ENCODE measurements at regions of chr15 and their contacts with region 1.

Region 1: GRCh38 chr15:68277603-68278344 is at the start of gene FEM1B:
- DNase-seq: peak; percentile 73 to 96 (median 86)
- ATAC-seq: peak; percentile 76
- H3K4me3 ChIP-seq: peak within 1 kb of the TSS; percentile 90 to 93
- H3K4me3 Mint-ChIP-seq: peak within 1 kb of the TSS; percentile 98
- H3K27ac ChIP-seq: peak within 1 kb of the TSS; percentile 92 to 98
- H3K27ac Mint-ChIP-seq: peak within 1 kb of the TSS; percentile 98
- H3K4me1 ChIP-seq: peaks cover 47% of the 10 kb centered on the region
- H3K4me1 Mint-ChIP-seq: peaks cover 60% of the 10 kb centered on the region
- H3K27me3 ChIP-seq: no peaks in the 10 kb centered on the region
- H3K27me3 Mint-ChIP-seq: no peaks in the 10 kb centered on the region
- CTCF ChIP-seq: no peak
- total RNA-seq, gene FEM1B: 89.7 to 90.6 TPM

Region 2: GRCh38 chr15:66504563-66505429 is 1773.0 kb before region 1 on chr15 and contains the starts of genes RPL4 and ZWILCH:
- CTCF ChIA-PET with region 1: no interaction called
- POLR2A ChIA-PET with region 1: no interaction called
- intact Hi-C with region 1: loop called in 1 of 2 experiments (anchors 5 kb)
- DNase-seq: peak; percentile 67 to 92 (median 80)
- ATAC-seq: peak; percentile 86
- H3K4me3 ChIP-seq: peak within 1 kb of the TSS; percentile 88 to 95
- H3K4me3 Mint-ChIP-seq: peak within 1 kb of the TSS; percentile 100
- H3K27ac ChIP-seq: peak within 1 kb of the TSS; percentile 90 to 97
- H3K27ac Mint-ChIP-seq: peak within 1 kb of the TSS; percentile 99
- H3K4me1 ChIP-seq: peaks cover 32% of the 10 kb centered on the region
- H3K4me1 Mint-ChIP-seq: peaks cover 44% of the 10 kb centered on the region
- H3K27me3 ChIP-seq: no peaks in the 10 kb centered on the region
- H3K27me3 Mint-ChIP-seq: no peaks in the 10 kb centered on the region
- CTCF ChIP-seq: no peak
- total RNA-seq, gene RPL4: 4,516 to 4,651 TPM
- total RNA-seq, gene ZWILCH: 7.9 to 8.5 TPM

Region 3: DNA sequence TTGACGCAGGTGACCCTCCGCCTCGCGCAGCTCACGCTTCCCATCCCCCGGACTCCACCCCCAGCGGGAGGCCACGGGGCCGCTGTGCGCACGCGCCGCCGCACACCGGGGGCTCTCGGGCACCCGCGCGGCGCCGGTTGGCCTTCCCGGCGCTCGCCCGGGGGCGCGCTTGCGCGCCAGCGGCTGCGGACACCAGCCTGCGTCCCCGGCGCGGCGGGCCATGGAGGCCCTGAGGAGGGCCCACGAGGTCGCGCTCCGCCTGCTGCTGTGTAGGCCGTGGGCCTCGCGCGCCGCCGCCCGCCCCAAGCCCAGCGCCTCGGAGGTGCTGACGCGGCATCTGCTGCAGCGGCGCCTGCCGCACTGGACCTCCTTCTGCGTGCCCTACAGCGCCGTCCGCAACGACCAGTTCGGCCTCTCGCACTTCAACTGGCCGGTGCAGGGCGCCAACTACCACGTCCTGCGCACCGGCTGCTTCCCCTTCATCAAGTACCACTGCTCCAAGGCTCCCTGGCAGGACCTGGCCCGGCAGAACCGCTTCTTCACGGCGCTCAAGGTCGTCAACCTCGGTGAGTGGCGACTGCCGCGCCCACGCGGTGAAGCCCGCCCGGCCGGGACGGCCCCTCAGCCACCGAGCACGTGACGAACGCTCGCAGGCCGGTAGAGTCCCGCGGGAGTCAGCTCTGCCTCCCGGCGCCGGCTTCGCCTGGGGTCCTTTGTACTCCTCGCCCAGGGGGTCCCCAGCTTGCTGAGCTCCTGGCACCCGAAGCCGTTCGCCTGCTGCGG is 756.6 kb before region 1 on chr15 and contains the start of gene C15orf61:
- CTCF ChIA-PET with region 1: no interaction called
- POLR2A ChIA-PET with region 1: interaction called, 3 read pairs
- intact Hi-C with region 1: loop called (anchors 1 to 5 kb)
- DNase-seq: peak; percentile 61 to 94 (median 84)
- ATAC-seq: peak; percentile 82
- H3K4me3 ChIP-seq: peak within 1 kb of the TSS; percentile 92 to 95
- H3K4me3 Mint-ChIP-seq: peak within 1 kb of the TSS; percentile 93
- H3K27ac ChIP-seq: peak within 1 kb of the TSS; percentile 72 to 92
- H3K27ac Mint-ChIP-seq: peak within 1 kb of the TSS; percentile 94
- H3K4me1 ChIP-seq: peaks cover 14% of the 10 kb centered on the region
- H3K4me1 Mint-ChIP-seq: peaks cover 36% of the 10 kb centered on the region
- H3K27me3 ChIP-seq: no peaks in the 10 kb centered on the region
- H3K27me3 Mint-ChIP-seq: no peaks in the 10 kb centered on the region
- CTCF ChIP-seq: no peak
- total RNA-seq, gene C15orf61: 11.2 to 14.4 TPM

Region 4: DNA sequence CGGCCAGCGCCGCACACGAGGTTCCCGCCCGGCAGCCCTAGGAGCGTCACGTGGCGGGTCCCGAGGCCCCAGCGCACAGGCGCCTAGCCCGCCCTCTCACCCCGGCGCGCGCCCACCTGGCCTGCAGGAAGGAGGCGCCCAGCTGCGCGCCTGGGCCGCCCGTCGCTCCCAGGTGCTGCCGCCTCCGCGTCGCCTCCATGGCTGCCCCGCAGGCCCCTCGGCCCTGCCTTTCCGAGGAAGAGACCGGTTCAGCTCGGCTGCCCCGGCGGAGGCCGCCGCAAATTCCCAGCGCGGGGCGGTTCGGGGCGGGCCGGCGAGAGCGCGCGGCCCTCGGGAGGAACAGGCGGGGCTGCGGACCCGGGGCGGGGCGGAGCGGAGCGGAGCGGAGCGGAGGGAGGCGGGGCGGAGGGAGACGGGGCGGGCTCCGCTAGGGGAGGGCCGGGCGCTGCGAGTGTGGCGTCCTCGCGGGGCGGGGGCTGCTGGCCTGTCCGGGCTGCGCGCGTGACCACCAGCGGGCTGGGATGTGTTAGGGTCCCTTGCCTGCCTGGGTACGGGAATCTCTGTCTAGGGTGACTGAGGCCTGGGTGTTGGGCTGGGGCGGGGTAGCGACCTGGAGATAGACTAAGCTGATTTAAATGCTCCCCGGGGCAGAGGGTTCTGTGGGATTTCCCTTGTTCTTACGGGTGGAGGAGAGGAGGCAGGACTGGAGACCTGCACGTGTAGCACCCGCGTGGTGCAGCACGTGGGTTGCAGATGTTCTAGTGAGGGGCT is 48.2 kb before region 1 on chr15 and contains the start of gene CLN6:
- CTCF ChIA-PET with region 1: interaction called, 5 read pairs
- POLR2A ChIA-PET with region 1: interaction called, 18 read pairs
- intact Hi-C with region 1: loop called (anchors 1 kb)
- DNase-seq: peak; percentile 55 to 91 (median 80)
- ATAC-seq: peak; percentile 87
- H3K4me3 ChIP-seq: peak within 1 kb of the TSS; percentile 86 to 90
- H3K4me3 Mint-ChIP-seq: peak within 1 kb of the TSS; percentile 93
- H3K27ac ChIP-seq: peak within 1 kb of the TSS; percentile 60 to 62
- H3K27ac Mint-ChIP-seq: peak within 1 kb of the TSS; percentile 88
- H3K4me1 ChIP-seq: peaks cover 23% of the 10 kb centered on the region
- H3K4me1 Mint-ChIP-seq: peaks cover 36% of the 10 kb centered on the region
- H3K27me3 ChIP-seq: no peaks in the 10 kb centered on the region
- H3K27me3 Mint-ChIP-seq: peaks cover 5% of the 10 kb centered on the region
- CTCF ChIP-seq: peak; percentile 27
- total RNA-seq, gene CLN6: 7.6 to 7.9 TPM

Region 5: GRCh38 chr15:68298882-68299381 is 21.2 kb after region 1 on chr15:
- CTCF ChIA-PET with region 1: interaction called, 12 read pairs
- POLR2A ChIA-PET with region 1: interaction called, 26 read pairs
- intact Hi-C with region 1: loop called in 1 of 2 experiments (anchors 2 kb)
- DNase-seq: peak in 4 of 9 experiments; percentile 12 to 70 (median 46)
- ATAC-seq: peak; percentile 84
- H3K4me3 ChIP-seq: peak overlapping the region; percentile 44 to 49
- H3K4me3 Mint-ChIP-seq: peak overlapping the region; percentile 86
- H3K27ac ChIP-seq: peak overlapping the region; percentile 7 to 72
- H3K27ac Mint-ChIP-seq: peak overlapping the region; percentile 94
- H3K4me1 ChIP-seq: peaks cover 12% of the 10 kb centered on the region
- H3K4me1 Mint-ChIP-seq: peaks cover 37% of the 10 kb centered on the region
- H3K27me3 ChIP-seq: no peaks in the 10 kb centered on the region
- H3K27me3 Mint-ChIP-seq: no peaks in the 10 kb centered on the region
- CTCF ChIP-seq: no peak

Region 6: GRCh38 chr15:68352401-68353062 is 74.8 kb after region 1 on chr15:
- CTCF ChIA-PET with region 1: no interaction called
- POLR2A ChIA-PET with region 1: no interaction called
- intact Hi-C with region 1: no loop called
- DNase-seq: peak in 3 of 9 experiments; percentile 18 to 70 (median 25)
- ATAC-seq: no peak
- H3K4me3 ChIP-seq: no peak overlapping the region
- H3K4me3 Mint-ChIP-seq: no peak overlapping the region
- H3K27ac ChIP-seq: no peak overlapping the region
- H3K27ac Mint-ChIP-seq: no peak overlapping the region
- H3K4me1 ChIP-seq: no peaks in the 10 kb centered on the region
- H3K4me1 Mint-ChIP-seq: peaks cover 5% of the 10 kb centered on the region
- H3K27me3 ChIP-seq: no peaks in the 10 kb centered on the region
- H3K27me3 Mint-ChIP-seq: no peaks in the 10 kb centered on the region
- CTCF ChIP-seq: no peak

Region 7: DNA sequence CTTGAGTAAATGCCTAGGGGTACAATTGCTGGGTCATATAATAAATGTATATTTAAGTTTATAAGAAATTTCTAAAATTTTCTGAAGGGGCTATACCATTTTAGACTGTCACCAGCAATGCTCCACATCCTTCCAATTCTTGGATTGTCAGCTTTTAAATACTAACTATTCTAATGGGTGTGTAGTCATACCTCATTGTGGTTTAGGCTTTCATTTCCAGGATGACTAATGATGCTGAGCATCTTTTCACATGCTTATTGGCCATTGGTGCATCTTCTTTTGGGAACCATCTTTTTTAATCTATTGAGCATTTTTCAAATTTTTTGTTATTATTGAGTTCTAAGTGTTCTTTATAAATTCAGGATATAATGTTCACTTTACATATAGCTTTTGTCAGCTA is 248.5 kb after region 1 on chr15:
- CTCF ChIA-PET with region 1: no interaction called
- POLR2A ChIA-PET with region 1: no interaction called
- intact Hi-C with region 1: no loop called
- DNase-seq: no peak
- ATAC-seq: no peak
- H3K4me3 ChIP-seq: no peak overlapping the region
- H3K4me3 Mint-ChIP-seq: no peak overlapping the region
- H3K27ac ChIP-seq: no peak overlapping the region
- H3K27ac Mint-ChIP-seq: no peak overlapping the region
- H3K4me1 ChIP-seq: peaks cover 3% of the 10 kb centered on the region
- H3K4me1 Mint-ChIP-seq: peaks cover 14% of the 10 kb centered on the region
- H3K27me3 ChIP-seq: peaks cover 0 to 2% of the 10 kb centered on the region in 2 experiments
- H3K27me3 Mint-ChIP-seq: peaks cover 14% of the 10 kb centered on the region
- CTCF ChIP-seq: no peak

Region 8: DNA sequence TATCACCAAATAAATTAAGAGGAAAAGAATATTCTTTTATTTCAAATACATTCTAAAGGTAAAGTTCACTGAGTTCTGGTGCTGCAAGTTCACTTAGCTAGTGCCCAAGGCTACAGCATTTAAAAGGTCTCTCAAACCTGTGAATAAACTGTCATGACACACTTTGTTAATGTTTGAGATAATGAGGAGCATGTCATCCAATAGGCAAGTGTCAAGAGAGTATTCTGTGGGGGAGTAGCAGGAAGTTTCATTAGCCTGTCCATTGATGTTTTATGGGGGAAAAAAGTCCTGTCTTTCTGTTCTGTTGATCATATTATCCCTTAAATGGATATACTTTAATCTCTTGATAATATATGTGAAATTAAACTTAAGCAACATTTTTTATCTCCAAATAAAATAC is 656.6 kb after region 1 on chr15:
- CTCF ChIA-PET with region 1: no interaction called
- POLR2A ChIA-PET with region 1: no interaction called
- intact Hi-C with region 1: no loop called
- DNase-seq: no peak
- ATAC-seq: no peak
- H3K4me3 ChIP-seq: no peak overlapping the region
- H3K4me3 Mint-ChIP-seq: no peak overlapping the region
- H3K27ac ChIP-seq: no peak overlapping the region
- H3K27ac Mint-ChIP-seq: no peak overlapping the region
- H3K4me1 ChIP-seq: no peaks in the 10 kb centered on the region
- H3K4me1 Mint-ChIP-seq: no peaks in the 10 kb centered on the region
- H3K27me3 ChIP-seq: no peaks in the 10 kb centered on the region
- H3K27me3 Mint-ChIP-seq: peaks cover 12% of the 10 kb centered on the region
- CTCF ChIP-seq: no peak

Region 9: GRCh38 chr15:69452692-69453521 is 1175.1 kb after region 1 on chr15 and contains the start of gene RPLP1:
- CTCF ChIA-PET with region 1: no interaction called
- POLR2A ChIA-PET with region 1: no interaction called
- intact Hi-C with region 1: loop called in 1 of 2 experiments (anchors 10 kb)
- DNase-seq: peak; percentile 91 to 97 (median 95)
- ATAC-seq: peak; percentile 88
- H3K4me3 ChIP-seq: peak within 1 kb of the TSS; percentile 86 to 91
- H3K4me3 Mint-ChIP-seq: peak within 1 kb of the TSS; percentile 97
- H3K27ac ChIP-seq: peak within 1 kb of the TSS; percentile 75 to 92
- H3K27ac Mint-ChIP-seq: peak within 1 kb of the TSS; percentile 99
- H3K4me1 ChIP-seq: peaks cover 32% of the 10 kb centered on the region
- H3K4me1 Mint-ChIP-seq: peaks cover 47% of the 10 kb centered on the region
- H3K27me3 ChIP-seq: no peaks in the 10 kb centered on the region
- H3K27me3 Mint-ChIP-seq: no peaks in the 10 kb centered on the region
- CTCF ChIP-seq: no peak
- total RNA-seq, gene RPLP1: 2,675 to 2,824 TPM

Region 10: DNA sequence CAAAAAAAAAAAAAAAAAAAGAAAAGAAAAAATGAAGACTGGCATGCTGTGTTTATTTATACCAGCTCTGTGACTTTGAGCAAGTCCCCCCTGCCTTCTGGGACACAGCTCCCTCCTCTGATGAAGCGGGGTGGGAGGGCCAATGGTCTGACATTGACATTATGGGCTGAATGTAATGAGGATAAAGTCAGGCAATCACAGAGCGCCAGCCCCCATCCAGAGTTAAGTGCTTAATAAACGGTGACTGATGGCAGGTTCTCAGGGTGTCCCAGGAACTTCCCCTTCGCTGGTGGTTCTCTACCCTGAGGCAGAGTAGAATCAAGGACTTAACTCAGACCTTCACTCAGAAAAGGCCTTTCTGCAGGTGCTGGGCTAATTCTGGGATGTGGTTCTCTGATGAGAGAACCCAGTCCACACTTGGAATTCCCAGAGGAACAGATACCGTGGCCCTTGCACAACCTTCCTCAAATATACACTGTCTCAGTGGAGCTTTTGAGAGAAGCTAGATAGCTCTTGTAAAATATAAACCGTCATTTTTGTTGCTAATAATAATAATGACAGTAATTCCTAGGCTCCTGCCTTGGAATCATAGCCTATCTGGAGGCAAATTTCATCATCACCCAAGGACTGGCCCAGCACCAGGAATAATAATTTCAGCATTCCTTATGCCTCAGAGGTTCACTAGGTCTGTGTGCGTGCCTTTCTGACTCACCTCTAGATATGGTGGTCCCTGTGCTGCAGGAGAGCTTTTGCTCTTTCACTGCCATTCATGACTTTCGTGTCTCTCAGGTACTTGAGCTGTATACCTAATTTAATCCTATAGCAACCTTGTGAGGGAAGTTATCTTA is 1290.6 kb after region 1 on chr15:
- CTCF ChIA-PET with region 1: no interaction called
- POLR2A ChIA-PET with region 1: no interaction called
- intact Hi-C with region 1: no loop called
- DNase-seq: no peak
- ATAC-seq: no peak
- H3K4me3 ChIP-seq: no peak overlapping the region
- H3K4me3 Mint-ChIP-seq: no peak overlapping the region
- H3K27ac ChIP-seq: no peak overlapping the region
- H3K27ac Mint-ChIP-seq: no peak overlapping the region
- H3K4me1 ChIP-seq: no peaks in the 10 kb centered on the region
- H3K4me1 Mint-ChIP-seq: peaks cover 1% of the 10 kb centered on the region
- H3K27me3 ChIP-seq: no peaks in the 10 kb centered on the region
- H3K27me3 Mint-ChIP-seq: no peaks in the 10 kb centered on the region
- CTCF ChIP-seq: no peak

Measured in CD8-positive, alpha-beta T cell (primary cell).